ENCODE measurements at regions of chr16 and their contacts with region 1.

Region 1: DNA sequence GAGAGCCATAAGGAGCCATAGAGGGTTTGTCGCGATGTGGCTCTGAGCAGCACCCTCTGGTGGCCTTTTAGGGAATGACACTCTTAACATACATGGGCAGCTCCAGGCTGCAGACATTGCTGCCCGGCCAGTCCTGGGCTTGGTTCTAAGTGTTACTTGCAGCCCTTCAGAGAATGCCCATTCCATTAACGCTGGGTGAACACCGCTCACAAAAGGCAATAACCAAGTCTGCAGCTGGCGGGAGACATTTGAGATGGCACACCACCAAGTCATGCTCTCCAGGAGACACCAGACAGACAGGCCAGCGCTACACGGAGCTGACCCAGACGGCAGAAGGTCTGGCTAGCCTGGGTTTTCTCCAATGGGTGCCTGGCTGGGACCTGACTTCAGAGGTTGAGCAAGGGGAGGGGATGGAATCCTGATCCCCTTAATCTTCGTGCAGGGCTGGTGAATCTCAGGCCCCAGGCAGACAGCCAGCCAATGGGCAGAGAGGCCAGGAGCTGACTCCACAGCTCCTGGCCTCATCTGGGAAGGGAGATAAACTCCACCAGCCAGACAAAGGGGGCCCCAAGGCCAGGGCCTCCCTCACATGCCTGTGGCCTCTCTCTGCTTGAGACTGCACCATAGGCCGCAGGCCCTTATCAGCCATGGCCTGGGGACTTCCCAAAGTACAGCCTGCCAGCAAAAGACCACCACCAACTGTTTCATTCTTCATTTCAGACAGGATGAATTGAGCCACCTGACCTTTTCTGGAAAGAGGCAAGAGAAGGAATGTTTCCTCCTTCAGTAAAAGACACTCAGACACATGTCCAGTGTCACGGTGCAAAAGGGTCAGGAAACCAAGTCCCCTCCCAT is 58.8 kb downstream of the ZDHHC7 start:
- DNase-seq: peak; percentile 79
- H3K4me3 Mint-ChIP-seq: no peak overlapping the region
- H3K27ac Mint-ChIP-seq: no peak overlapping the region
- H3K4me1 Mint-ChIP-seq: no peaks in the 10 kb centered on the region
- H3K27me3 Mint-ChIP-seq: peaks cover 36% of the 10 kb centered on the region

Region 2: GRCh38 chr16:84970447-84971127 is 18.0 kb after region 1 on chr16:
- CTCF ChIA-PET with region 1: interaction called, 29 read pairs
- DNase-seq: peak; percentile 84
- H3K4me3 Mint-ChIP-seq: no peak overlapping the region
- H3K27ac Mint-ChIP-seq: no peak overlapping the region
- H3K4me1 Mint-ChIP-seq: peaks cover 4% of the 10 kb centered on the region
- H3K27me3 Mint-ChIP-seq: peaks cover 24% of the 10 kb centered on the region

Region 3: DNA sequence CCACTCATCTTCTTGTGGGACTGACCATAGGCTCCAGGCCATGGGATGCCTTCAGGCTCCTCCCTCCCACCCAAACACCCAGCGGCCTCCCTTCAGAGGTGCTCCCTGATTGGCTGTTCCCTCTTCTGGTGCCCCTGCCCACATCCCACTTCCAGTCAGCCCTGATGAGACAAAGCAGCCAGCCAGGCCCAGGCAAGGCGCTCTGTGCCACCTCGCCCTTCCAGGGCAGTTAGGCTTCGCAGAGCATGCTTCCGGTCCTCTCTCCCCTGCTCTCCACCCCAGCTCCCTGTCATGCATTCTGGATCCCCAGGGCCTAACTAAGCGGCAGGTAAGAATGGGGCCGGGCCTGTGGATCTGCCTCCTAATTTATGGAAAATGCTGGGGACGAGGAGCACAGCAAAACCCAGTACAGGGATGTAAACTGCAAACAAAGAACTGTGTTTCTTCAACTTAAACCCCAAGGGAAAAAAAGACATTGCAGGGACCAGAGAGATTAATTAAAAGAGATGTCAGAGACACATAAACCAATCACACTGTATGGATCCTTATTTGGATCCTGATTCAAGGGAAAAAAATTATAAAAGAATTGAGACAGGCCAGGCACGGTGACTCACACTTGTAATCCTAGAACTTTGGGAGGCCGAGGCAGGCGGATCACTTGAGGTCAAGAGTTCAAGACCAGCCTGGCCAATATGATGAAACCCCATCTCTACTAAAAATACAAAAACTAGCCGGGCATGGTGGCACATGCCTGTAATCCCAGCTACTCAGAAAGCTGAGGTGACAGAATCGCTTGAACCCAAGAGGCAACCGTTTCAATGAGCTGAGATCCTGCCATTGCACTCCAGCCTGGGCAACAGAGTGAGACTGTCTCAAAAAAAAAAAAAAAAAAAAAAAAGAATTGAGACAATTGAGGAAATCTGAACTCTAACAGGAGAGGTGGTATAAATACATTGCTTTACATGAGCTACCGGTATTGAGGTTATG is 32.8 kb after region 1 on chr16:
- CTCF ChIA-PET with region 1: no interaction called
- DNase-seq: no peak
- H3K4me3 Mint-ChIP-seq: no peak overlapping the region
- H3K27ac Mint-ChIP-seq: no peak overlapping the region
- H3K4me1 Mint-ChIP-seq: peaks cover 3% of the 10 kb centered on the region
- H3K27me3 Mint-ChIP-seq: no peaks in the 10 kb centered on the region

Region 4: GRCh38 chr16:84995663-84996062 is 43.1 kb after region 1 on chr16:
- CTCF ChIA-PET with region 1: no interaction called
- DNase-seq: no peak
- H3K4me3 Mint-ChIP-seq: no peak overlapping the region
- H3K27ac Mint-ChIP-seq: no peak overlapping the region
- H3K4me1 Mint-ChIP-seq: peaks cover 12% of the 10 kb centered on the region
- H3K27me3 Mint-ChIP-seq: no peaks in the 10 kb centered on the region

Region 5: DNA sequence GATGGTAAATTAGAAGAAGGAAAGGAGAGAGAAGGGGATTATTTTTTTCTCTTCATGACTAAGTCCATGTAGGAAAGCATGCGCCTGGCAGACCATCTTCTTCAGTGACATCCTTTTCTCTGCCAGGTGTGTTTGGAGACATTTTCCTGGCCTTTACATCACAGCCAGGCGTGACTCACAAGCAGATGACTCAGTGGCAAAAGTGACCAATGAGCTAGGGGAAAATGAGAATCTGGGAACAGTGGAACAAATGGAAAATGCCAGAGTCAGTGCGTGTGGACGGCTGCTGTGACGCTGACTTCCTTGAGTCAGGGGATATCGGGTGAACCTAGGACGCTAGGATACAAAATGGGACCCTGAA is 84.5 kb after region 1 on chr16:
- CTCF ChIA-PET with region 1: no interaction called
- DNase-seq: no peak
- H3K4me3 Mint-ChIP-seq: no peak overlapping the region
- H3K27ac Mint-ChIP-seq: no peak overlapping the region
- H3K4me1 Mint-ChIP-seq: no peaks in the 10 kb centered on the region
- H3K27me3 Mint-ChIP-seq: peaks cover 4% of the 10 kb centered on the region

Region 6: DNA sequence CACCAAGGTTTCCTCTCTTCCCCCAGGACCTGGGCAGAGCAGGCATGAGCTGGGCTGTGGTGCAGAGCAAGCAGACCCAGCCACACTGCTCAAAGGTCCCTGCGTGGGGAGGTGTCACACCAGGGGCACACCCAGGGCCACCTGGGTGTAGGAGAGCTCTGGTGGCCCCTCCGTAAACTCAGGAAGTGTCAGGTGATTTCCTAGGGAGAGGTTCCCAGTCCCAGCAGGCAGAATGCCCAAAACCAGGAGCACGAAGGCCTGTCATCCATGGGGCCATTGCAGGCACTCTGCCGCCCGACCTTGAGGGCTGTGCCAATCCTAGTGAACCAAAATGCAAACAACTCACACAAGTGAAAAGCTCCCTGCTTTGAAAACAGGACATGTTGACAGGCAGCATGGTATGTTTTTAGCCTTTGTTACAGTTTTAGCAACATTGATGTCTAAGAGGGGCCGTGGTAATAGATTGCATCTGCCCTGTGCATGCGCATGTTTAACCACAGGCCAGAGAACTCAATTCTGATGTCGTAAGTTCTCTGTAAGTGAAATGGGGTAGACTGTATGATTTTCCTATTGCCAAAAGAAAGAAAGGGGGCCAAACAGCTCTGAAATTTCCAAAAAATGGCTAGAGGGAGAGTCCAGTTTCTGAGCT is 138.4 kb after region 1 on chr16:
- CTCF ChIA-PET with region 1: no interaction called
- DNase-seq: no peak
- H3K4me3 Mint-ChIP-seq: no peak overlapping the region
- H3K27ac Mint-ChIP-seq: no peak overlapping the region
- H3K4me1 Mint-ChIP-seq: peaks cover 21% of the 10 kb centered on the region
- H3K27me3 Mint-ChIP-seq: peaks cover 15% of the 10 kb centered on the region